ENCODE measurements at regions of chr9 and their contacts with region 1.

Region 1: GRCh38 chr9:124894741-124895170 is 32.8 kb downstream of the ARPC5L start:
- DNase-seq: peak; percentile 7
- H3K4me3 Mint-ChIP-seq: no peak overlapping the region
- H3K27ac Mint-ChIP-seq: peak overlapping the region; percentile 1
- H3K4me1 Mint-ChIP-seq: peaks cover 11% of the 10 kb centered on the region
- H3K27me3 Mint-ChIP-seq: no peaks in the 10 kb centered on the region

Region 2: DNA sequence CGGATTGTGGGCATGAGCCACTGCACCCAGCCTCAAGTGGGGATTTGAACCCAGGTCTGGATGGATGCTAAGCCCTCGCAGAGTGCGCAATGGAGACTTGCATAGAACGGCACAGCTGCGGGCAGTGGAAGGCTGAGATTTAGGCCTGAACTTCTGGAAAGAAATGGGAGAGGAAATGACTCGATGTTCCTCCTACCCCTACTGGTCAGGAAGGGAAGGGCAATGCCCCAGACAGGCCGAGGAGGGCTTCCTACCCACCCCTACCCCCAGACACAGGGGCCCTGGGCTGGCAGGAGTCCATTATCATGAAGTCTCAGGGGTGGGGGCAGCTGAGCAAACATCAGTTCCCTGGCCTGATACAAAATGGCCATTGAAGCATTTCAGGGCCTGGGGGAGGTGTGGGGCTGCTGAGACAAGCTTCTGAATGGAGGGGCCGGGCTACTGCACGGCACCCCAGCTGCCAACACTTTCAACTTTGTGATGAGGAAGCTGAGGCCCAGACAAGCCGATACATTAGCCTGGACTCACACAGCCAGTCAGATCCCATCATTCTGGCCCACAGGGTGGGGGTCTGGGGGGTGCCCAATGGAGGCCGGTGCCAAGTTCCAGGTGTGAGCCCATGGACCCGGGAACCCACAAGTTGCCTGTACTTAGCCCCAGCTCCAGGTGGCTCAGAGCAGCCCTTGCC is 55.0 kb before region 1 on chr9:
- intact Hi-C with region 1: no loop called
- DNase-seq: no peak
- H3K4me3 Mint-ChIP-seq: no peak overlapping the region
- H3K27ac Mint-ChIP-seq: no peak overlapping the region
- H3K4me1 Mint-ChIP-seq: no peaks in the 10 kb centered on the region
- H3K27me3 Mint-ChIP-seq: peaks cover 11% of the 10 kb centered on the region

Region 3: DNA sequence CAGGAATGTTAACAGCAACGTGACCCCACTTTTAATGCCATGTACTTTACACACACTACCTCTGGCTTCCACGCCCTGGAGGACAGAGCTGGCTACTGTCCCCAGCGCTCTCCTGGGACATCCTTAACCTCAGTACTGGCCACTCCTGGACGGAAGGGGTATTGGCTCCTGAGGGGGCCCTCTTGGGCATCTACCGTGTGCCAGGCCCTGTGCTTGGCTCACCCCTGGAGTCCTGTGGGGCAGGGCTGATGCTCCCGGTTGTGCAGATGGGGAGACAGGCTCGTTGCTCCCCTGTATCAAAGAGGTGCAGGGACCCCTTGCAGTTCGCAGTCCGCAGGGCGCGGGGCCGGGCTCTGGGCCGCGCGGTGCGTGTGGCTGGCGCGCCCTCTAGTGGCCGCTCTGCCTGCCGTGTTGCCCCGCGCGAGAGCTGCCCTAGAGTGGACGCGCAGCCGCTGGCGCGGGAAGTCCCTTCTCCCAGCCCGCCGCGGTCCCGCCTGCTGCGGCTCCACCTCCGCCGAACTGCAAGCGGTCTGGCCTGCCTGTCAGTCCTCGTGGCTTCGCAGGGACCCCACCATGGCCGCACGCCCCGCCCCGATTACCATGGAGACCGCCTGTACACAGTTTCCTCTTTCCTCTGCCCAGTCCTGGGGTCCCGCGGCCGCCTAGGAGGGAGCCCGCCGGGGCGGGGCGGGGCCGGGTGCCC is 41.8 kb before region 1 on chr9 and contains the start of gene WDR38:
- intact Hi-C with region 1: loop called (anchors 2 kb)
- DNase-seq: peak; percentile 79
- H3K4me3 Mint-ChIP-seq: peak within 1 kb of the TSS; percentile 68
- H3K27ac Mint-ChIP-seq: no peak within 1 kb of the TSS
- H3K4me1 Mint-ChIP-seq: peaks cover 16% of the 10 kb centered on the region
- H3K27me3 Mint-ChIP-seq: peaks cover 9% of the 10 kb centered on the region
- total RNA-seq, gene WDR38: not detected in 2 replicates

Region 4: GRCh38 chr9:124861342-124862229 is 33.2 kb before region 1 on chr9 and contains the starts of genes ARPC5L and RPL35:
- intact Hi-C with region 1: loop called (anchors 2 kb)
- DNase-seq: peak; percentile 95
- H3K4me3 Mint-ChIP-seq: peak within 1 kb of the TSS; percentile 96
- H3K27ac Mint-ChIP-seq: peak within 1 kb of the TSS; percentile 98
- H3K4me1 Mint-ChIP-seq: peaks cover 35% of the 10 kb centered on the region
- H3K27me3 Mint-ChIP-seq: no peaks in the 10 kb centered on the region
- total RNA-seq, gene ARPC5L: 111 and 115 TPM in 2 replicates
- total RNA-seq, gene RPL35: 1,681 and 1,750 TPM in 2 replicates

Region 5: DNA sequence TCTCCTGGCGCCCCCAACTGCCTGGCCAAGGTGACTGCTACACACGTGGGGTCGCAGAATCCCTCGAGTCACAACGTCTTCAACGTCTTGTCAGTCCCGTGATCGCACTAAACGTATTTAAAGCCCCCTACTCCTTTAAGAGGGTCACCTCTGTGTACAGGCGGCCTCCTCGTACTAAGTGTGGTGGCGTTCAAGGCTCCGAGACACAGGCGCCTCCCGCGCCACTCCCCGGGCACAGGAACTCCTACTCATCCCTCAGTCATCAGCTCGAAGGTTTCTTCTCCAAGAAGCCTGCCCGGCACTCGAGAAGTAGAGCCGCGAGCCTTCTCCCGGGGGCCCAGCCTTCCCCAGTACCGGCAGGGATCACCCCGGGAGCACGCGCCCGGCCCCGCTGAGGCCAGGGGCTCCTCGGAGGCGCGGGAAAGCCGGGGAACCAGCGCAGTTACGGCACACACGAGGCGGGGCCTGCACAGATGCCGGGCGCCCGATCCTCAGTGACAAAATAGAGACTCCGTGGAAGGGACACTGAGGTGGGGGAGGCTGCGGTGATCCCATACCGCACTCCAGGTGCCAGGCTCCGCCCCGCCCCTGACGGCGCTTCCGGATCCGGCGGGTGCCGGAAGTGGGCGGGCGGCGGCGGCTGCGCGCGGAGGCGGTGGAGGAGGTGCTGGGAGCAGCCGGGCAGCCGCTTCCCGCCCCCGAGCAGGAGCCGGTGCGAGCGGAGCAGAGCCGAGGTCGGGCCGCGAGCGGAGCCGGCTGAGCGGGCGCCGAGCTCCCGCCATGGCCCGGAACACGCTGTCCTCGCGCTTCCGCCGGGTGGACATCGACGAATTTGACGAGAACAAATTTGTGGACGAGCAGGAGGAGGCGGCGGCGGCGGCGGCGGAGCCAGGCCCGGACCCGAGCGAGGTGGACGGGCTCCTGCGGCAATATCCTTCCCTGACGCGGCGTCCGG is 26.0 kb before region 1 on chr9:
- intact Hi-C with region 1: loop called (anchors 1 kb)
- DNase-seq: peak; percentile 93
- H3K4me3 Mint-ChIP-seq: peak overlapping the region; percentile 99
- H3K27ac Mint-ChIP-seq: peak overlapping the region; percentile 100
- H3K4me1 Mint-ChIP-seq: peaks cover 56% of the 10 kb centered on the region
- H3K27me3 Mint-ChIP-seq: peaks cover 1% of the 10 kb centered on the region

Region 6: GRCh38 chr9:124932333-124932732 is 37.6 kb after region 1 on chr9:
- intact Hi-C with region 1: no loop called
- DNase-seq: no peak
- H3K4me3 Mint-ChIP-seq: no peak overlapping the region
- H3K27ac Mint-ChIP-seq: no peak overlapping the region
- H3K4me1 Mint-ChIP-seq: peaks cover 13% of the 10 kb centered on the region
- H3K27me3 Mint-ChIP-seq: no peaks in the 10 kb centered on the region

Measured in activated T-helper 1 cell treated with anti-CD3 and anti-CD28 coated beads, Interleukin-12 subunit alpha, Interleukin-12 subunit beta, Interleukin-2, Interleukin-4 antibody, amounts not matched to agents 30 ng/mL and 10 ng/mL and 1 ng/mL, durations not matched to agents 14 hours and 24 hours and 36 hours (primary cell).